Head of caudate nucleus (tissue), 42 donors: ENCODE measurements at regions of chr5 and their contacts with region 1.

Region 1: DNA sequence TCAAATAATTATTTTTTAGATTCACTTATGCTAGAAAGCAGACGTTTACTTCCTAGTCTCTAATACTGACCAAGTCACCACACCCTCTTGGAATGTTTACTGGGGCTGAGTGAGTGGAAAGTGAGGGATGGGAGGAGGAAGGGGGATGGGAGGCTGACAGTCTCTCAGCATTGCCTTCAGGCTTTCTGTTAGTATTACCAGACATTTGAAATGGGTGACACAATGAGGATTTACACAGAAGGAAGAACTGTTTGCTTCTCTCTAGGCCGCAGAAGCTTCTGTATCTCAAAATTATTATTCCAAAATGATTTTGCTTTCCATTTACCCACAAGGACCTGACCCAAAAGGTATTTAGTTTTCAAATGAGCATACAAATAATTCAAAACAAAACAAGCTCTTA is 232.8 kb upstream of the ZNF608 start:
- DNase-seq: no peak

Region 2: DNA sequence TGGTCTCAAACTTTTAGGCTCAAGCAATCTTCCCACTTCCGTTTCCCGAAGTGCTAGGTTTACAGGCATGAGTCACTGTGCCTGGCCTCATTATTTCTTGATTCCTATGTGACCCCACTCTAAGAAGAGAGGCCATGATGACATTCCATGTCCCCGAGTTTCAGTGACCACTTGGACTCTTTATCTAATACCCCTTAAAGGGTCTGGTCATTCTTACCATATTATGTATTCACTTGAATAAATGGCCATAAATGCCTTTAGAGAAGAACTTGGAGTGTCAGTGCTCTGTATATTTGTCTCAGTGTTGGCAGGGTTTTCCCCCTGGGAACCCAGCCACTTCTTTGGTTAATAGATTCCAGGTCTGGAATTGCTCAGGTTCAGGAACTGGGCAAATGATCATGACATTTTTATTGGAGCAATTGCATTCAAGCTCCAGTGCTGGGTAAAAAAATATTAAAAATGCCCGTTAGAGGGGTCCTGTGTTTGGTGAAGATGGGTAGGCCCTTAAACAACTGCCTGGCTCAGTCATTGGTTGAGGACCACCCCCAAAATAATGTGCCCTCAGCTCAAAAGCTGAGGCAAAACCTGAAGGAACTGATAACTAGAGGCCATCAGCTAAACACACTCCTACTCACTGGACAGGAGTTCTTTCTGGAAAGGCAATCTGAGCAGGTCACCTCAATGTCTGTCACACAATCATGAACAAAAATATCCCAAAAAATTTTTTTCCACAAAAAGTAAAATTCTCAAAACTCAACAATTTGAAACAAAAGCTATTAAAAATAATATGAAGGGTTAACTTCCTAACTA is 46.3 kb before region 1 on chr5:
- intact Hi-C with region 1: loop called (anchors 5 kb)
- DNase-seq: peak in 1 of 42 donors; percentile 11

Region 3: GRCh38 chr5:125476901-125477585 is 497.8 kb after region 1 on chr5:
- intact Hi-C with region 1: no loop called
- DNase-seq: no peak